ENCODE measurements at regions of chr18 and their contacts with region 1.

Region 1: GRCh38 chr18:45686891-45687611 is 36.9 kb upstream of the SLC14A1 start:
- DNase-seq: peak in 1 of 7 donors; percentile 30
- H3K4me3 ChIP-seq: no peak overlapping the region
- H3K27ac ChIP-seq: no peak overlapping the region
- H3K4me1 ChIP-seq: no peaks in the 10 kb centered on the region
- H3K27me3 ChIP-seq: no peaks in the 10 kb centered on the region
- CTCF ChIP-seq: no peak
- POLR2A ChIP-seq: no peak

Region 2: GRCh38 chr18:45540125-45540524 is 146.9 kb before region 1 on chr18:
- intact Hi-C with region 1: no loop called
- DNase-seq: no peak
- H3K4me3 ChIP-seq: no peak overlapping the region
- H3K27ac ChIP-seq: no peak overlapping the region
- H3K4me1 ChIP-seq: no peaks in the 10 kb centered on the region
- H3K27me3 ChIP-seq: no peaks in the 10 kb centered on the region
- CTCF ChIP-seq: no peak
- POLR2A ChIP-seq: no peak

Region 3: GRCh38 chr18:45626330-45627203 is 60.5 kb before region 1 on chr18:
- intact Hi-C with region 1: no loop called
- DNase-seq: no peak
- H3K4me3 ChIP-seq: no peak overlapping the region
- H3K27ac ChIP-seq: peak overlapping the region in 1 of 5 donors; percentile 29
- H3K4me1 ChIP-seq: no peaks in the 10 kb centered on the region
- H3K27me3 ChIP-seq: no peaks in the 10 kb centered on the region
- CTCF ChIP-seq: no peak
- POLR2A ChIP-seq: no peak

Region 4: DNA sequence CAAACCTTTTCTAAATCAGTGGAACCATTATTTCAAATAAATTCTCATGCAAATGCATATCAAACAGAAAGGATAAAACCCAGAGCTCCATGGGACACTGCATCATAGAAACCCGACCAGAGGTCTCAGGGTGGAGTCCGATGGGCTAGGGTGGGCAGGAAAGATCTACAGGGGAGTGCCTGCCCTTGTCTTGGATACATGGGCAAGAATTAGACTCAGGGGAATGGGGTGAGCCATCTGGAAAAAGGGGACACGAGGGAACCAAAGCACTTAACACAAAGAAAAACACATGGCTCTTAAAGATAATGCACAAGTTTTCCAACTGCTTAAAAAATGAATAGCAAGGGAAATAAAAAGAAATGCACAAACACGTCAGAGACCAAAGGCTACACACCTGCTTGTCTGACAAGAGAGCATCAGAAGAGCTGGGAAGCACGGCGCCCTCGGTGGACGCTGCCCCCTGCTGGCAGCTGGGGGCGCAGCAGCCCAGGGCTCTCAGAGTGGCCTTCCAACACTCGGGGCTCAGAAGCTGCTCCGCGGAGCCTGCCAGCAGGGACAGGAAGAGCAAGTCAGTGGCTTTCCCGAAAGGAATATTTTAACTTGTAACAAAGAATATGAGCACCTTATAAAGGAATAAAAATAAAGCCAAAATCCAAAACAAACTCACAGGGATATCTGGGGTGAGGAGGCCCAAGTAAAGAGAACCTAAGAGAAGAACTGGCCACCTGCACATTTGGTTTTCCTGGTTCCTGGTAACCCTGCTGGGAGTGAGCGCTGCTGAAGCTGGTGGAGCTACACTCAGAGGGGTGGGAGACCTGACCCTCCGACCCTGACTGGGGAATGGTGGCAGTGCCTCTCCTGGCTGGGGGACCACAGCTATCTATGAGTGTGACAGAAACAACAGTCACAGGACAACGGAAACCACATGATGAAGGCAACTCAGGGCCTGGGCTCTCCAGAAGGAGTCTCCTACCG is 192.9 kb after region 1 on chr18:
- intact Hi-C with region 1: loop called in 1 of 2 experiments (anchors 5 kb)
- DNase-seq: peak; percentile 64 to 85 (median 78)
- H3K4me3 ChIP-seq: no peak overlapping the region
- H3K27ac ChIP-seq: peak overlapping the region in 1 of 5 donors; percentile 24
- H3K4me1 ChIP-seq: peaks cover 0 to 6% of the 10 kb centered on the region in 2 donors
- H3K27me3 ChIP-seq: no peaks in the 10 kb centered on the region
- CTCF ChIP-seq: peak; percentile 93 to 100 (median 96)
- POLR2A ChIP-seq: no peak

Measured in adrenal gland (tissue), 19 donors.